ENCODE measurements at regions of chr10 and their contacts with region 1.

Region 1: GRCh38 chr10:24706479-24707118 is 17.1 kb downstream of the ARHGAP21 start:
- DNase-seq: peak; percentile 62
- H3K4me3 Mint-ChIP-seq: no peak overlapping the region
- H3K27ac Mint-ChIP-seq: no peak overlapping the region
- H3K4me1 Mint-ChIP-seq: peaks cover 10% of the 10 kb centered on the region
- H3K27me3 Mint-ChIP-seq: peaks cover 1% of the 10 kb centered on the region

Region 2: GRCh38 chr10:24642622-24643417 is 63.8 kb before region 1 on chr10:
- CTCF ChIA-PET with region 1: interaction called, 3 read pairs
- POLR2A ChIA-PET with region 1: no interaction called
- intact Hi-C with region 1: loop called (anchors 5 kb)
- DNase-seq: no peak
- H3K4me3 Mint-ChIP-seq: no peak overlapping the region
- H3K27ac Mint-ChIP-seq: no peak overlapping the region
- H3K4me1 Mint-ChIP-seq: no peaks in the 10 kb centered on the region
- H3K27me3 Mint-ChIP-seq: no peaks in the 10 kb centered on the region

Region 3: GRCh38 chr10:24652381-24652957 is 54.1 kb before region 1 on chr10:
- CTCF ChIA-PET with region 1: no interaction called
- POLR2A ChIA-PET with region 1: no interaction called
- intact Hi-C with region 1: loop called (anchors 2 kb)
- DNase-seq: no peak
- H3K4me3 Mint-ChIP-seq: no peak overlapping the region
- H3K27ac Mint-ChIP-seq: no peak overlapping the region
- H3K4me1 Mint-ChIP-seq: peaks cover 13% of the 10 kb centered on the region
- H3K27me3 Mint-ChIP-seq: no peaks in the 10 kb centered on the region

Region 4: DNA sequence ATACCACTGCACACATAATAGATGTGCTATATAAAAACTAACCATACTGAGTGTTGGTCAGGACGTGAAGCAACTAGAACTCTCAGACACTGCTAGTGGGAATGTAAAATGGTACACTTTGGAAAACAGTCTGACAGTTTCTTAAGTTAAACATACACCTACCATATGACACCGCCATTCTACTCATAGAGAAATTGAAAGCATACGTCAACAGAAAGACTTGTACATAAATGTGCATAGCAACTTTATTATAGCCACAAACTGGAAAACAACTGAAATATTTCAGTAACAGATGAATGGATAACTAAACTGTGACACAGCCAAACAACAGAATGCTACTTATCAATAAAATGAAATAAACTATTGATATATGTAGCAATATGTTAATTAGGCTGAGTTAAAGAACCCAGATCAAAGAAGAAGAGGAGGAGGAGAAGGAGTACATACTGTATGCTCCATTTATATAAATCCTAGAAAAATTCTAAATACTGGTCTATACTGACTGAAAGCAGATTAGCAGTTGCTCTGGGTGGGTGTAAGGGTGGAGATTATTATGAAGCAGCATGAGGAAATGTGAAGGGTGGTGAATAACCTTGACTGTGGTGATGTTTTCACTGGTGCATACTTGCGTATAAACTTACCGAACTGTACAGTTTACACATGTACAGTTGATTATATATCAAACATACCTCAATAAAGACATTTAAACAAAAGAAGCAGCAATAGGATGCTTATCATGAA is 31.5 kb before region 1 on chr10:
- CTCF ChIA-PET with region 1: no interaction called
- POLR2A ChIA-PET with region 1: no interaction called
- intact Hi-C with region 1: loop called (anchors 1 kb)
- DNase-seq: no peak
- H3K4me3 Mint-ChIP-seq: no peak overlapping the region
- H3K27ac Mint-ChIP-seq: no peak overlapping the region
- H3K4me1 Mint-ChIP-seq: peaks cover 13% of the 10 kb centered on the region
- H3K27me3 Mint-ChIP-seq: no peaks in the 10 kb centered on the region

Region 5: GRCh38 chr10:24724381-24725228 is 18.0 kb after region 1 on chr10:
- CTCF ChIA-PET with region 1: interaction called, 14 read pairs
- POLR2A ChIA-PET with region 1: interaction called, 12 read pairs
- intact Hi-C with region 1: loop called (anchors 1 kb)
- DNase-seq: peak; percentile 97
- H3K4me3 Mint-ChIP-seq: peak overlapping the region; percentile 88
- H3K27ac Mint-ChIP-seq: peak overlapping the region; percentile 93
- H3K4me1 Mint-ChIP-seq: peaks cover 19% of the 10 kb centered on the region
- H3K27me3 Mint-ChIP-seq: no peaks in the 10 kb centered on the region

Region 6: DNA sequence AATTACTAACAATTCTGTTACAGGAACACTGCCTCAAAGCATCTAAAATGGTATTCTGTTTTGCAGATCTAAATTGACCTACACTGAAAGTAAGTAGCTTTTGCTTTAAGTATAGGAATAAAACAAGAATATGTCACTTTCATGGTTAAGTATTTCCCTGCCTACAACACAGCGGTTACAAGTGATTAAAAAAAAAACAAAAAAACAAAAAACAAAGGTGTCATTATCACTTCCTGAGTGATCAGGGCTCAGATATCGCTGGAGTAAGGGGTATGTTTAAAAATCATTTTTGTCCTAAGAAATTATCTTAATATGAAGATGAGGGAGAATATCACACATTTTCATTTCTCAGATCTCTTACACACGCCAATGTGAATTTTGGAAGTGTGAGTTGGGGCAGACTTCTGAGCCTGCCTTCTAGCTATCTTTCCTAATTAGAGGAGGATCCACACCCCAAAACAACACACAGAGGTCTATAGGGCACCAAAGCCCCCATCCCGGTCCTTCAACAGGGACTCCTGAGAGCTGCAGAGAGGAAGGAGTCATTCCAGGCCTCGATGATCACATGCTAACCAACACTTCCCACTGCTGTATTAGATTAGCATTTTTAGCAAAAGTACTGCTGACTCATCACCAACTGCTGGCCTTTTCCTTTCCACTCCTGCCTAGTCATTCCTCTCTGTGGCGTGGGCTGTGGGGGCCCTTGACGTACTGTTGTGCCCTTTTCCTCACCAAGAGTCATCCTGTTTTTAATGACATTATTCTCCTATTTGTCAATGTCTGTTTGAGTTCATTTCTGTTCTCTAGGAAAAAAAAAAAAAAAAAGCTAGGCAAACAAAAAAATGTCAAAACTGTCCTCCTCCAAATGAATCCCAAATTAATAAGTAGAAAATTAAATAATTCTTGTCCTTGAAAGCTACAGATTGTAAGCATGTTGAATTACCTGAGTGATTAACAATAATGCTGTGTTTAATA is 214.6 kb after region 1 on chr10:
- CTCF ChIA-PET with region 1: no interaction called
- POLR2A ChIA-PET with region 1: no interaction called
- intact Hi-C with region 1: loop called (anchors 1 kb)
- DNase-seq: peak; percentile 89
- H3K4me3 Mint-ChIP-seq: peak overlapping the region; percentile 22
- H3K27ac Mint-ChIP-seq: peak overlapping the region; percentile 78
- H3K4me1 Mint-ChIP-seq: peaks cover 21% of the 10 kb centered on the region
- H3K27me3 Mint-ChIP-seq: no peaks in the 10 kb centered on the region

Region 7: GRCh38 chr10:24947304-24948097 is 240.9 kb after region 1 on chr10:
- CTCF ChIA-PET with region 1: no interaction called
- POLR2A ChIA-PET with region 1: no interaction called
- intact Hi-C with region 1: loop called (anchors 2 kb)
- DNase-seq: no peak
- H3K4me3 Mint-ChIP-seq: no peak overlapping the region
- H3K27ac Mint-ChIP-seq: no peak overlapping the region
- H3K4me1 Mint-ChIP-seq: peaks cover 29% of the 10 kb centered on the region
- H3K27me3 Mint-ChIP-seq: peaks cover 4% of the 10 kb centered on the region